GM13977 (cell line): ENCODE measurements at regions of chr20 and their contacts with region 1.

Region 1: DNA sequence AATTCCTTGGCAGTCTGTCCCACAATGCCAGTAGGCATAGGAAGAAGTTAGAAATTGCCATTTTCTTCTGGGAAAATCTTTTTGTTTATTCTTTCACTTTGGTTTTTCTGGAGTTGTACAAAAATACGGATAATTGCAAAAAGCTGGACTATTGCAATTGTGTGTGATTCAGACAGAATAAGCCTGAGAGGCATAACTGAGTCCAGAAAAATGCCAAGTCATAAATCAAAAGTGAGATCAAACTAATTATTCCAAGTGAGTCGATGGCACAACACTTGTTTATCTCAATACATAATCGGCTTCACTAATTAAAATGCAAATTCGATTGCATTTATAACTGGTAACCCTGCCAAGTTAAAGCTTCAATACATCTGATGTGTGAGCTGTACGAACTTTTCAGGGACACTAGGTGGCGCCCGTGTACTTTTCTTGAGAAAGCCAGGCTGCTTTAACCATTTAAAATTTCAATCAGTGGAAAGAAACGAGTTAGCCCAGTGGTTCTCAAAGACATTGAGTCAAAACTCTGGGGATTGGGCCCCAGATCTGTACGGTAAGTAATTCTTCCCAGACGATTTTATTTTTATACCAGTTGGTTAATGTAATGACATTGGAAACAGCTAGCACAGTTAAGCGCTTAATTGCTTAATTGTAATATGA is 102.6 kb downstream of the LAMP5 start:
- DNase-seq: peak; percentile 46
- CTCF ChIP-seq: peak; percentile 83

Region 2: DNA sequence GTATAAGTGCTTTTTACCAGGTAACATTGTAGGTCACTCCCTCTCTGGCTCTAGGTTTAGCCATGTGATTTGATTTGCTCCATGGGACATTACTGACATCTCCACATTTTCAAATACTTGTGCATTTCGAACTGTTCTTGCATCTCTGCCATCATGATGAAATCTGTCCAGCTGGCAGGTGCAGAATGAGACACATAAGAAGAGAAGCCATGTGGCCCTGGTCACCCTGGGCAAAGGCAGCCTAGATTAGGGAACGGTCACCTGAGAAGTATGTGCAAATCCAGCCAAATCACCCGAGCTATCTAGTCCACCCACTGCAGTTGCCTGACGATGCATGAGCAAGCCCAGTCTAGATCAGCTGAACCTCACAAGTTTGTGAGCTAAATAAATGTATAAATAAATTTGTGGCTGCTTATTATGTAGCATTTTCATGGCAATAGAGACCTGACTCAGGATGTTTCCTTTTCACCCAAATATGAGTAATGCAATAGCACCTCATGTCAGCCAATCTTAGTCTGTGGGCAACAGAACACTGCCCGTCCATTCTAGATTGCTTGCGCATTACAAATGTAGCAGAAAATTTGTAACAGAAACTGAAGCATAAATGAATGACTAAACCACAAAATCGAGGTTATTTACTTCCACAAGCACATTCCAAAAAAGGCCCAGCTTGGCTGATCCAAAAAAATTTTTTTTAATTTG is 106.7 kb after region 1 on chr20:
- in situ Hi-C with region 1: no loop called
- DNase-seq: no peak
- CTCF ChIP-seq: no peak

Region 3: DNA sequence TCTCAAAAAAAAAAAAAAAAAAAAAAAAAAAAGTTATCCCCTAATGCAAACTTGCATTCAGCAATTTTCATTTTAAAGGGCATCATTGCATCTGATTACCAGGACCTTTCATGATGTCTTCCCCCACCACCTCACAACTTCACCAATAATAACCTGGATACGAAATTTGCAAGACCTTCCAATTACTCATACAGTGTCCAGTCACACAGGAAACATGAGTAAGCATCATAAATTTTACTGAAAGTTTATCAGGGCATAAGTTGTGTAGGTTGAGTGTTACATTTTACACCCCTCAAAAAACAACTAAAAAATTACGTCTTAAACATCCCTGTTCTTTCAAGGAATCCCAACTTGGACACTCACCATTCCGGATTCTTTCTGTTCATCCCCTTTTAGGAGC is 338.7 kb after region 1 on chr20:
- in situ Hi-C with region 1: no loop called
- DNase-seq: no peak
- CTCF ChIP-seq: no peak

Region 4: GRCh38 chr20:10090588-10091166 is 473.7 kb after region 1 on chr20:
- in situ Hi-C with region 1: loop called (anchors 25 kb)
- DNase-seq: peak; percentile 20
- CTCF ChIP-seq: peak; percentile 58

Region 5: GRCh38 chr20:10434467-10434831 is 817.5 kb after region 1 on chr20:
- in situ Hi-C with region 1: loop called (anchors 25 kb)
- DNase-seq: peak; percentile 69
- CTCF ChIP-seq: no peak